Gastrocnemius medialis (tissue), 4 donors: ENCODE measurements at regions of chr4 and their contacts with region 1.

Region 1: DNA sequence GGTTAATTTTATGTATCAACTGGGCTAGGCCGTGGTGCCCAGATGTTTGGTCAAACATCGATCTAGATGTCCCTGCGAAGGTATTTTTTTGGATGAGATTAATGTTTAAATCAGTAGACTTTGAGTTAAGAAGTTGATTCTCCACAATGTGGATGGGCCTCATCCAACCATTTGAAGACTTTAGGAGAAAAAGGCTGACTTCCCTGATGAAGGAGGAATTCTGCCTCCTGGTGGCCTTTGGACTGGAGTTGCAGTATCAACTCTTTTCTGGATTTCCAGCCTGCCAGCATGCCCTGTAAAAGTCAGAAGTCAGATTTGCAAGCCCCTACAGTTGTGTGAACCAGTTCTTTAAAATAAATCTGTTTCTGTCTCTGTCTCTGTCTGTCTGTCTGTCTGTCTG is 91.4 kb downstream of the STK32B start:
- DNase-seq: no peak
- ATAC-seq: no peak
- H3K4me3 ChIP-seq: no peak overlapping the region
- H3K27ac ChIP-seq: no peak overlapping the region
- H3K4me1 ChIP-seq: no peaks in the 10 kb centered on the region
- H3K27me3 ChIP-seq: no peaks in the 10 kb centered on the region
- CTCF ChIP-seq: peak in 2 of 5 experiments; percentile 7 to 24
- POLR2A ChIP-seq: no peak

Region 2: DNA sequence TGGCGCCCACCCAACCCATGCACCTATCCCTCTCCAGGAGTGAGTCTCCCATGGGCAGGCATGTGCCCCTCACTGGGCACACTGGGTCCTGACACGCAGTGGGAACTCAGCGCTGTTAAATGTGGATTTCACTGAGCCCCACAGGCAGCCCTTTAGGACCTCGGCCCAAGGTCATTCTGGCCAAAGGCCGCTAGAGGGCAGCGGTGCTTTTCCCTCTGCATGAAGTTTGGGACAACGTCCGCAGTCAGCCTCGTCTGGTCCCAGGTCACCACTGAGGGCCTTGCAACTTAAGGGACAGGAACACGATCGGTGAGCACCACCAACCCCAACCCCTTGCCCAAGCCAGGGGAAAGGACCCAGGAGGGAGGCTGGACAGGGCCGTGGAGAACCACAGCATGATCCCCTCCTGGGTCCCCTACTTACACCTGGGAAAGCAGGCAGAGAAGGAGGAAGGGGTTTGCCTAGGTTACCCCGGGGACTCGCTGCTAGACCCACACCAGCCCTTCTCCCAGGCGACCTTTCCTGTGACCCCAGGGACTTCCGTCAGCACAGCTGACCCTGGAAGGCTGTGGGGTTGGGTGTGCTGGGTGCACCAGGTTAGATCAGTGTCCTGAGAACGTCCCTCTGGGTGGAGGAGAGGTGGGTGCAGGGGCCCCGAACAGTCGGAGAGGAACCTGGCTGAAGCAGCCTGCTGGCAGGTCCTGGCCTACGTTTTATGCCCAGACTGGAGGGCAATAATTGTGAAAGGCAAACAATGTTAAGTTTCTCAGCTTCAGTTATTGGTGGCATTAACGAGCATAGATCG is 147.4 kb before region 1 on chr4:
- in situ Hi-C with region 1: no loop called
- intact Hi-C with region 1: loop called (anchors 5 kb)
- DNase-seq: peak; percentile 24 to 32
- ATAC-seq: peak; percentile 27 to 45
- H3K4me3 ChIP-seq: no peak overlapping the region
- H3K27ac ChIP-seq: no peak overlapping the region
- H3K4me1 ChIP-seq: no peaks in the 10 kb centered on the region
- H3K27me3 ChIP-seq: no peaks in the 10 kb centered on the region
- CTCF ChIP-seq: peak; percentile 33 to 75 (median 61)
- POLR2A ChIP-seq: no peak